ENCODE measurements at regions of chr9 and their contacts with region 1.

Region 1: DNA sequence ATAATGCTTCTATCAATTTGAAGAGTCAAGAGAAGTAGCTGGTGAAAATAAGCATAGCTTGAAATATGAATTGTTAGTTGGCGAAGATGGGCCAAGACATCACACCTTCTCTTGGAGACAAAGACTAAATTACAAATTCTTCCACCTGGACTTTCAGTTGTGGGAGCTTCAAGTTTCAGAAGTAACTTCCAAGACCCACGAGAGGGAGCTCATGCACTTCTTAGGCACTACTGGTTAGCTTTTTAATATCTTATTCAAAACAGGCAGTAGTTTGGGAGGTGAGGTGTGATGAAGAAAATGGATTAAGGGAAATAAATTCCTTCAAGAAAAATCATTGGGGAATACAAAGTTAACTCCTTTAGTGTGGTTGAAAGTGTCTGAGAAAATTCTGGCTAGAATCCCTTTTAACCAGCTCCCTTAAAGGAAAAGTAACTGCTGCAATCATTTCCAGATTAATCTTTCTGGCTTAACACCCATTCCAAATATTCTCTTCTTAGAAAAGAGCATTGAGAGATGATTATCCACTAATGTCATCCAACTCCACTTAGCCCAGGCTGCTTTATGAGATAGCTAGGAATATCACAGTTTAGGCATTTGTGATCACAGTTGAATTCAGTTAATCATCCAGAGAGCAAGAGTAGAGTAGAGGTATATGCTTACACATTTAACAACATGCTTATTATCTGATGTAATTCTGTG is 139.5 kb upstream of the DMRTA1 start:
- DNase-seq: no peak
- ATAC-seq: peak in 1 of 2 donors; percentile 52
- H3K4me3 ChIP-seq: no peak overlapping the region
- H3K27ac ChIP-seq: no peak overlapping the region
- H3K4me1 ChIP-seq: no peaks in the 10 kb centered on the region
- H3K27me3 ChIP-seq: no peaks in the 10 kb centered on the region
- CTCF ChIP-seq: peak; percentile 49

Region 2: GRCh38 chr9:22363421-22363887 is 56.3 kb after region 1 on chr9:
- intact Hi-C with region 1: no loop called
- DNase-seq: no peak
- ATAC-seq: peak in 1 of 2 donors; percentile 39
- H3K4me3 ChIP-seq: no peak overlapping the region
- H3K27ac ChIP-seq: no peak overlapping the region
- H3K4me1 ChIP-seq: no peaks in the 10 kb centered on the region
- H3K27me3 ChIP-seq: no peaks in the 10 kb centered on the region
- CTCF ChIP-seq: no peak

Region 3: DNA sequence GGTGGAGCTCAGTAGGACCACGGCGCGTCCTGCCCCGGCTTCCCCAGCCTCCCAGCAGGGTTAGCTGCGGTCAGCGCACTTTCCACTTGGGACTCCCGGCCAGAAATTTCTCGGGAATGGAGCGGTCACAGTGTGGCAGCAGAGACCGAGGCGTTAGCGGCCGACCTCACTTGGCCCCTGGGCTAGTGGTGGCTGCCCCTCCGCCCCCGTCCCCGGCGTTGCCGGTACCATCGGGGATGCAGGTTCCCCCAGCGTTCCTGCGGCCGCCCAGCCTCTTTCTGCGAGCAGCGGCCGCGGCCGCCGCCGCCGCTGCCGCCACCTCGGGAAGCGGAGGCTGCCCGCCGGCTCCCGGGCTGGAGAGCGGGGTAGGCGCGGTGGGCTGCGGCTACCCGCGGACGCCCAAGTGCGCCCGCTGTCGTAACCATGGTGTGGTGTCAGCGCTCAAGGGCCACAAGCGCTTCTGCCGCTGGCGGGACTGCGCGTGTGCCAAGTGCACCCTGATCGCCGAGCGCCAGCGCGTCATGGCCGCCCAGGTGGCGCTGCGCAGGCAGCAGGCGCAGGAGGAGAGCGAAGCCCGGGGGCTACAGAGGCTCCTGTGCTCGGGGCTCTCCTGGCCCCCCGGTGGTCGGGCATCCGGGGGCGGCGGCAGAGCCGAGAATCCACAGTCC is 139.9 kb after region 1 on chr9:
- intact Hi-C with region 1: loop called (anchors 10 kb)
- DNase-seq: peak; percentile 79
- ATAC-seq: peak; percentile 94 to 95
- H3K4me3 ChIP-seq: peak overlapping the region; percentile 66
- H3K27ac ChIP-seq: peak overlapping the region; percentile 85
- H3K4me1 ChIP-seq: peaks cover 9% of the 10 kb centered on the region
- H3K27me3 ChIP-seq: peaks cover 29% of the 10 kb centered on the region
- CTCF ChIP-seq: peak; percentile 22